ENCODE measurements at regions of chr1 and their contacts with region 1.

Region 1: DNA sequence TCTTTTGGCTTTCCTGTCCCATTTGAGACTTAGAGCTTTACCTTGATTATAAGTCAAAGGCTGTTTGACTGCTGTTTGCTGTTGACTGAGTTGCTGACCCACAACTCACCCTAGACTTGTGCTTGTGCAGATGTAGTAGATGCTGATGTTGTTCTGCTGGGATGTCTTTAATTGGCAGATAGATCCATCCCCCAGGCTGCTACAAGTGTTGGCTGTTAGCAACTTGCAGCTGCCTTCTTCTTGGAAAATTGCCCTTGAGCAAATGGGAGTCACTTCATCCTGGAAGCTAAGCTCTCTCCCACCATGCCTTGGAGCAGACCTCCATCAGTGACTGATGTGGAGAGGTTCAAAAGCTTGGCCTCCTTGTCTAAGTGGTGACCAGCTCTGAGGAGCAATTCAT is 139.3 kb upstream of the KIAA0040 start:
- DNase-seq: no peak

Region 2: GRCh38 chr1:174060090-174060489 is 1271.8 kb before region 1 on chr1:
- intact Hi-C with region 1: loop called in 1 of 2 experiments (anchors 5 kb)
- DNase-seq: no peak